ENCODE measurements at regions of chr1 and their contacts with region 1.

Region 1: DNA sequence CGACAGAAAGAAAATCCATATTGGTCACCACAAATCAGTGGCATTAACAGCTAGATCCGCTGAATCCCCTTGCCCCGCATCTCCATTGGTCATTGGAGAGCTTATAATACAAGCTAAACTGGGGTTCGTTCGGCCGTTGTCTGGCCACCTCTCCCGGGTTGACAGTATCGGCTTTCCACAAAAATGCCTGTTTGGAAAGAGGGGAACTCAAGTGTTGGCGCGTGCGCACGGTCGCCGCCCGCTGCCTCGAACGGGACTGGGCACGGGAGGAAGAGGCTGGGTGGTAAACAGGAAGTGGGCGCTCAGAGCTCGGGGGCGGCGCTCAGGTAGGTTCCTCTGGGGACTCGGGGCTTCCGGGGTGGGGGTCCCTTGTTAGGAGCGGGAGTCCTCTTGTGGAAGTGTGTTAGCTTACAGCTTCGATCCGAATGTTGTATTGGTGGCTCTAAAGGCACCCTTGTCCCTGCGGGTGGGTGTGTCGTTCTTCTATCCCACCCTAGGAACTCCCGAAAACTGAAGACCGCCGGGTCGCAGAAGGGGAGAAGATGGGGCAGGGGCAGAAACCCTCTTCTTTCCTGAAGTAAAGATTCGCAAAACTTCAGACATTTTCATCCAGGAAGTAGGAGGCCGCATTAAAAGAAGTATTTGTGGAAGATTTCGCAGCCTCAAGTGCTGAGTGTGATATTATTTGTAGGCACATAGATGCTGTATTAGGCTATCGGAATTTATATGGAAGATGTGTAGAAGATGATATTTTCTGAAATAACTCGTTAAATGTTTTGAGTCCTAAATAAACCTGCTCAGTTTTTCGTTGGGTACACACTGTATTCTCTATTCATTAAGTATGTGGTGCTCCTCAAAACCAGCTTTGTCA is 962 bp downstream of the BROX start:
- DNase-seq: peak; percentile 81 to 97 (median 92)
- ATAC-seq: peak; percentile 69
- H3K4me3 ChIP-seq: peak overlapping the region; percentile 90
- H3K4me3 Mint-ChIP-seq: peak overlapping the region; percentile 99
- H3K27ac ChIP-seq: peak overlapping the region; percentile 97 to 98
- H3K27ac Mint-ChIP-seq: peak overlapping the region; percentile 100
- H3K4me1 ChIP-seq: peaks cover 23% of the 10 kb centered on the region
- H3K4me1 Mint-ChIP-seq: peaks cover 62% of the 10 kb centered on the region
- H3K27me3 ChIP-seq: no peaks in the 10 kb centered on the region
- H3K27me3 Mint-ChIP-seq: no peaks in the 10 kb centered on the region
- CTCF ChIP-seq: peak; percentile 34

Region 2: DNA sequence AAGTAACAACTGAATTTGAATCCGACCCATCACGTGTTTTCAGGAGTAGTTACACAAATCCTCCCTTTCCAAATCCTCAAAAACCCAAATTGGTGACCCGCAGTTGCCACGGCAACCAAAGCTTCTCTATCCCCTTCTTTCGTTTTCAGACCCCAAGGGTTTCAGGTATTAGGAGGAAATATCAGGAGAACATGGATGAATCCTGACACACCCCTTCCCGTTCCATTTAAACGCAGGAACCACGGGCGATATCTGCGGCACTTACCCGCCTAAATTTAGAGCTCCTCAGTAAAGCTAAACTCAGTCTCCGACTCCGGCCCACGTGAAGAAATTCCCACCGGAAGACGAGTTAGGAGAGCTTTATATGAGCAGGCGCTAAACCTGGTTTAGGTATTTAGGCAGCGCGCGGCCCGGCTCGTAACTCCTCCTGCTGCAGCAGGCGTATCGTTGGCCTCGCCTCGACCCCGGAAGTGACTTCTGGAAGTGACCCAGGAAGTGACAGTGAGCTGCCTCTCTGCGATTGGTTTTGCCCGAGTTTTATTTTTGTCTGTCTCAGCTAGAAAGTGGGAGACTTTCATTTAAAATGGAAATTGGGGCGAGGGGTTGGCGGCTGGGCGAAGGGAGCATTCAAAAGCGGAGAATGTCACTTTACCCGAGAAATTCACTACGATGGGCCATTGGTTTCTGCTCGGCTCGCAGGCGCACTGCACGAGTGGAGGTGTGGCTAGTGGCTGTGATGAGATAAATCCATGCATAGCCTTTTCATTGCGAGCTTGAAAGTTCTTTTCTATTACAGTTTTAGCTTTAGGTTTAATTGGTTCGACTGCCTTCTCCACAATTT is 123.6 kb before region 1 on chr1 and contains the start of gene TAF1A:
- CTCF ChIA-PET with region 1: no interaction called
- POLR2A ChIA-PET with region 1: interaction called, 31 read pairs
- intact Hi-C with region 1: loop called in 1 of 2 experiments (anchors 1 kb)
- DNase-seq: peak; percentile 74 to 93 (median 82)
- ATAC-seq: peak; percentile 99
- H3K4me3 ChIP-seq: peak within 1 kb of the TSS; percentile 74
- H3K4me3 Mint-ChIP-seq: peak within 1 kb of the TSS; percentile 97
- H3K27ac ChIP-seq: peak within 1 kb of the TSS; percentile 67 to 76
- H3K27ac Mint-ChIP-seq: peak within 1 kb of the TSS; percentile 99
- H3K4me1 ChIP-seq: peaks cover 14% of the 10 kb centered on the region
- H3K4me1 Mint-ChIP-seq: peaks cover 55% of the 10 kb centered on the region
- H3K27me3 ChIP-seq: no peaks in the 10 kb centered on the region
- H3K27me3 Mint-ChIP-seq: no peaks in the 10 kb centered on the region
- CTCF ChIP-seq: no peak
- total RNA-seq, gene TAF1A: 3.3 to 4.1 TPM

Region 3: DNA sequence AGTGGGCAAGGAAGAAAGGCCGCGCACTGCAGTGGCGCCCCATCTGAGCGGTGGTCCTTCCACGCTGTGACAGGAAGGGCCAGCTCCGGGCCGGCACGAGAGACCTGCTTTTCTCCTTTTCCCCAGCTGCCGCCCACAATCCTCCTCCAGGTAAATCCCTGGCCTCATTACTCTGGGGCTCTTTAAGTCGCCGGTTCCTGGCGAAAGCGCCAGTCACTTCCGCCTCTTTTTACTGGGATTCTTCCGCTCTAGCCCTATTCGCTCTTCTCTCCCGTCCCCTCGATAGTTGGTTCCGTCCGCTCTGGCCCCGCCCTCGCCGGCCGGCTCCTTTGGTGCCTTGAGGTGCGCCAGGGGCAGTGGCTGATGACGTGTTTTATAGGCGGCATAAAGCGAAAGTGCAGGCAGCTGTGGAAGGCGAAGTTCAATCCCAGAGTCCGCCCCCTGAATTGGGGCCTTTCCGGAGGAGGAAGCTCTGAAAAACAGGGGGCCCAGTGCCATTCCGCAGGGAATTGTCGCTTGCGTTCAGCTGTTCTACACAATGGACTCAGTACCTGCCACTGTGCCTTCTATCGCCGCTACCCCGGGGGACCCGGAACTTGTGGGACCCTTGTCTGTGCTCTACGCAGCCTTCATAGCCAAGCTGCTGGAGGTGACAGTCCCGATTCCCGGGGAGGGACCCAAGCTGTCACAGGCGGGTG is 69.2 kb before region 1 on chr1:
- CTCF ChIA-PET with region 1: interaction called, 9 read pairs
- POLR2A ChIA-PET with region 1: interaction called, 70 read pairs
- intact Hi-C with region 1: loop called (anchors 1 to 2 kb)
- DNase-seq: peak; percentile 91 to 99 (median 96)
- ATAC-seq: peak; percentile 83
- H3K4me3 ChIP-seq: peak overlapping the region; percentile 73
- H3K4me3 Mint-ChIP-seq: peak overlapping the region; percentile 94
- H3K27ac ChIP-seq: peak overlapping the region; percentile 95 to 97
- H3K27ac Mint-ChIP-seq: peak overlapping the region; percentile 99
- H3K4me1 ChIP-seq: peaks cover 20% of the 10 kb centered on the region
- H3K4me1 Mint-ChIP-seq: peaks cover 44% of the 10 kb centered on the region
- H3K27me3 ChIP-seq: no peaks in the 10 kb centered on the region
- H3K27me3 Mint-ChIP-seq: no peaks in the 10 kb centered on the region
- CTCF ChIP-seq: no peak

Region 4: DNA sequence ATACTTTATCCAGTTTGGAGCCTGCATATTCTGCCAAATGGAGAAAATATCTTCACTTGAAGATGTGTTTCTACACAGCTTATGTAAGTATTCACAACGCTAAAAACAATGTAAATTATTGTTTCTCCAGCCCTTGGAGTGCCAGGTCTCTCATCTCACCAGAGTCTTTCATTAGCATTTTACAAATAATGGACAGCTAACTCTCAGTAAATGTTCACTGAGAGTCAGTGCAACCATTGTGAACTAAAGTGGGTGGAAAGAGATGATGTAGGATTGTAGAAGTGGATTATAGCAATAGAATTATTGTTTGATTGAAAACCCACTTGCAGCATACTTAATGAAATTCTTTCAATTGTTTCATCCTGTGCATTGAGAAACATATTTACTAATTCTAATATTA is 15.4 kb after region 1 on chr1:
- CTCF ChIA-PET with region 1: interaction called, 3 read pairs
- POLR2A ChIA-PET with region 1: interaction called, 13 read pairs
- intact Hi-C with region 1: no loop called
- DNase-seq: no peak
- ATAC-seq: no peak
- H3K4me3 ChIP-seq: no peak overlapping the region
- H3K4me3 Mint-ChIP-seq: no peak overlapping the region
- H3K27ac ChIP-seq: no peak overlapping the region
- H3K27ac Mint-ChIP-seq: peak overlapping the region; percentile 32
- H3K4me1 ChIP-seq: no peaks in the 10 kb centered on the region
- H3K4me1 Mint-ChIP-seq: no peaks in the 10 kb centered on the region
- H3K27me3 ChIP-seq: no peaks in the 10 kb centered on the region
- H3K27me3 Mint-ChIP-seq: no peaks in the 10 kb centered on the region
- CTCF ChIP-seq: no peak

Region 5: GRCh38 chr1:223845810-223846682 is 1132.7 kb after region 1 on chr1 and contains the start of gene TP53BP2:
- CTCF ChIA-PET with region 1: no interaction called
- POLR2A ChIA-PET with region 1: interaction called, 10 read pairs
- intact Hi-C with region 1: no loop called
- DNase-seq: peak; percentile 68 to 94 (median 83)
- ATAC-seq: peak; percentile 82
- H3K4me3 ChIP-seq: peak within 1 kb of the TSS; percentile 74
- H3K4me3 Mint-ChIP-seq: peak within 1 kb of the TSS; percentile 99
- H3K27ac ChIP-seq: peak within 1 kb of the TSS; percentile 84 to 93
- H3K27ac Mint-ChIP-seq: peak within 1 kb of the TSS; percentile 100
- H3K4me1 ChIP-seq: peaks cover 30% of the 10 kb centered on the region
- H3K4me1 Mint-ChIP-seq: peaks cover 43% of the 10 kb centered on the region
- H3K27me3 ChIP-seq: no peaks in the 10 kb centered on the region
- H3K27me3 Mint-ChIP-seq: no peaks in the 10 kb centered on the region
- CTCF ChIP-seq: peak; percentile 61
- total RNA-seq, gene TP53BP2: 104 to 119 TPM